GM18951 (cell line): ENCODE measurements at regions of chr4 and their contacts with region 1.

Region 1: GRCh38 chr4:150874338-150875226 is 140.5 kb downstream of the LRBA start:
- POLR2A ChIP-seq: no peak

Region 2: GRCh38 chr4:150297861-150298474 is 576.6 kb before region 1 on chr4:
- in situ Hi-C with region 1: loop called (anchors 10 kb)
- POLR2A ChIP-seq: no peak

Region 3: DNA sequence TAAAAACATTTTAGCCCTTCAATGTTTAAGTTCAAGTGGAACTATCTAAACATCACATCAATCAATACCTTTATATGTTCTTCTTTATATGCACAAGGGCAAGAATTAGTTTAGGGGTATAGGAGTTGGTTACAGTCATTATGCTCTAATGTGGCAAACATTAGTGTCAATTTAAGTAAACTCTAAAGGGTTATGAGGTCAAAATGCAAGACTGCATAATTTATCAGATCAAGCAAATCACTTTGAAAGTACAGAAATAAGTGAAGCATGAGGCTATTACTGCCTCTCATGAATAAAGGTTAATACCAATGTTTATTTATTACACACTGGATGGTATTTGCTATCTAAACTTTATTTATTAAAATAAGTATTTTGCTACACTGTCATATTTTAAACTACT is 233.0 kb before region 1 on chr4:
- in situ Hi-C with region 1: no loop called
- POLR2A ChIP-seq: no peak

Region 4: GRCh38 chr4:151362404-151363164 is 488.0 kb after region 1 on chr4:
- in situ Hi-C with region 1: no loop called
- POLR2A ChIP-seq: no peak